Activated CD4-positive, alpha-beta T cell treated with anti-CD3 and anti-CD28 coated beads, Interleukin-2, amount 10 ng/mL, durations not matched to agents 24 days and 14 days (primary cell): ENCODE measurements at regions of chr4 and their contacts with region 1.

Region 1: GRCh38 chr4:168514249-168514852 is 17.5 kb downstream of the PALLD start:
- DNase-seq: peak; percentile 59
- H3K4me3 Mint-ChIP-seq: no peak overlapping the region
- H3K27ac Mint-ChIP-seq: no peak overlapping the region
- H3K4me1 Mint-ChIP-seq: peaks cover 26% of the 10 kb centered on the region
- H3K27me3 Mint-ChIP-seq: peaks cover 25% of the 10 kb centered on the region

Region 2: GRCh38 chr4:168318266-168318895 is 196.0 kb before region 1 on chr4 and contains the start of gene DDX60:
- intact Hi-C with region 1: loop called (anchors 2 kb)
- DNase-seq: peak; percentile 96
- H3K4me3 Mint-ChIP-seq: peak within 1 kb of the TSS; percentile 83
- H3K27ac Mint-ChIP-seq: peak within 1 kb of the TSS; percentile 96
- H3K4me1 Mint-ChIP-seq: peaks cover 51% of the 10 kb centered on the region
- H3K27me3 Mint-ChIP-seq: no peaks in the 10 kb centered on the region
- total RNA-seq, gene DDX60: 15.2 and 17.6 TPM in 2 replicates

Region 3: DNA sequence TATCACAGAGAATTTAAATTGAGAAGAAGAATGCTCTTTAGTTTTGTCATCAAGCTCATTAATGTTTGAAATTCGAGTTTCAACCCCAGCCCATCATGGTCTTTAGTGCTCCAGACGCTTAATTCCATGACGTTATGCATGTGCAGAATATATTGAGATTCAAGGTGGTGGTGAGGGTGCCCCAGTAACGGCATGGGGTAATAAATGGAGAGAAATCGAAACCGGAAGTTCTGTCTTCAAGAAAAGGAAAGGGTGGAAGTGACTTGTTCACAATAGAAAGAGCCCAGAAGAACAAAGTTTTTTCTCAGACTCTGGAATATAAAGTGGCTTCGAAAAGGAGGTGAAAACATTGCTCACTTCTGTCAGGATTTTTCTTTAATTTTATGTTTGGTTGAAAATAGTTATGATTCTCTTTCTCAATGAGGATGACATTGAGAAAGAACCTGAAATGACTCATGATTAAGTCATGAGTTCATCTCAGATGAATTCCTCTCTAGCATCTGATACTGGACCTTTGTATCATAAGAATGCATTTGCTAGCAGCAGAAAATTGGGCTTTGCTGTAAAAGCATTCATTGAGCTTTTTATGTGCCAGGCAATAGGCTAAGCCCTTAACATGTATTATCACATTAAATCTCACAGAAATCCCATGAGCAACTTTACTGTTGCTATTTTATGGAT is 33.3 kb before region 1 on chr4:
- intact Hi-C with region 1: loop called (anchors 1 kb)
- DNase-seq: peak; percentile 85
- H3K4me3 Mint-ChIP-seq: peak overlapping the region; percentile 98
- H3K27ac Mint-ChIP-seq: peak overlapping the region; percentile 99
- H3K4me1 Mint-ChIP-seq: peaks cover 60% of the 10 kb centered on the region
- H3K27me3 Mint-ChIP-seq: no peaks in the 10 kb centered on the region

Region 4: GRCh38 chr4:168831919-168832762 is 317.8 kb after region 1 on chr4:
- intact Hi-C with region 1: loop called (anchors 5 kb)
- DNase-seq: peak; percentile 91
- H3K4me3 Mint-ChIP-seq: peak overlapping the region; percentile 83
- H3K27ac Mint-ChIP-seq: peak overlapping the region; percentile 82
- H3K4me1 Mint-ChIP-seq: peaks cover 17% of the 10 kb centered on the region
- H3K27me3 Mint-ChIP-seq: peaks cover 44% of the 10 kb centered on the region

Region 5: GRCh38 chr4:169010125-169011023 is 496.0 kb after region 1 on chr4 and contains the start of gene CBR4:
- intact Hi-C with region 1: loop called (anchors 1 kb)
- DNase-seq: peak; percentile 98
- H3K4me3 Mint-ChIP-seq: peak within 1 kb of the TSS; percentile 94
- H3K27ac Mint-ChIP-seq: peak within 1 kb of the TSS; percentile 93
- H3K4me1 Mint-ChIP-seq: peaks cover 25% of the 10 kb centered on the region
- H3K27me3 Mint-ChIP-seq: peaks cover 6% of the 10 kb centered on the region
- total RNA-seq, gene CBR4: 20.6 and 22.8 TPM in 2 replicates

Region 6: GRCh38 chr4:169612871-169613859 is 1098.8 kb after region 1 on chr4:
- intact Hi-C with region 1: loop called (anchors 5 kb)
- DNase-seq: peak; percentile 91
- H3K4me3 Mint-ChIP-seq: peak overlapping the region; percentile 90
- H3K27ac Mint-ChIP-seq: peak overlapping the region; percentile 94
- H3K4me1 Mint-ChIP-seq: peaks cover 36% of the 10 kb centered on the region
- H3K27me3 Mint-ChIP-seq: no peaks in the 10 kb centered on the region